ENCODE measurements at regions of chr15 and their contacts with region 1.

Region 1: GRCh38 chr15:43791993-43792760 is at the start of gene SERF2:
- DNase-seq: peak; percentile 98 to 100 (median 98)
- ATAC-seq: peak; percentile 95
- H3K4me3 ChIP-seq: peak within 1 kb of the TSS; percentile 95
- H3K27ac ChIP-seq: peak within 1 kb of the TSS; percentile 99
- H3K4me1 ChIP-seq: peaks cover 26 to 35% of the 10 kb centered on the region in 2 experiments
- H3K27me3 ChIP-seq: no peaks in the 10 kb centered on the region
- CTCF ChIP-seq: no peak
- EP300 ChIP-seq: 0 out of 2 replicates have a peak, but pooled peaks have one; percentile 25
- POLR2A ChIP-seq: peak; percentile 98
- RAD21 ChIP-seq: no peak
- polyA plus RNA-seq, gene SERF2: 2,726 to 3,360 TPM

Region 2: GRCh38 chr15:43776718-43777583 is 15.2 kb before region 1 on chr15 and contains the start of gene ELL3:
- CTCF ChIA-PET with region 1: no interaction called
- POLR2A ChIA-PET with region 1: interaction called, 13 read pairs
- in situ Hi-C with region 1: no loop called
- intact Hi-C with region 1: no loop called
- DNase-seq: peak; percentile 44 to 63 (median 61)
- ATAC-seq: peak; percentile 74
- H3K4me3 ChIP-seq: peak within 1 kb of the TSS; percentile 32
- H3K27ac ChIP-seq: peak within 1 kb of the TSS; percentile 70
- H3K4me1 ChIP-seq: peaks cover 3 to 19% of the 10 kb centered on the region in 2 experiments; a peak in 4 of 5 replicates
- H3K27me3 ChIP-seq: no peaks in the 10 kb centered on the region
- CTCF ChIP-seq: peak; percentile 39 to 61 (median 41); a peak in 5 of 6 replicates
- EP300 ChIP-seq: no peak
- POLR2A ChIP-seq: peak; percentile 50; the same call in 1 of the 2 replicates
- RAD21 ChIP-seq: no peak
- polyA plus RNA-seq, gene ELL3: 2.9 to 3.6 TPM

Region 3: GRCh38 chr15:43808960-43809678 is 16.9 kb after region 1 on chr15:
- CTCF ChIA-PET with region 1: interaction called, 3 read pairs
- POLR2A ChIA-PET with region 1: interaction called, 14 read pairs
- in situ Hi-C with region 1: no loop called
- intact Hi-C with region 1: no loop called
- DNase-seq: no peak
- ATAC-seq: no peak
- H3K4me3 ChIP-seq: no peak overlapping the region
- H3K27ac ChIP-seq: no peak overlapping the region
- H3K4me1 ChIP-seq: peaks cover 0 to 8% of the 10 kb centered on the region in 2 experiments; a peak in 2 of 5 replicates
- H3K27me3 ChIP-seq: no peaks in the 10 kb centered on the region
- CTCF ChIP-seq: no peak
- EP300 ChIP-seq: no peak
- POLR2A ChIP-seq: no peak
- RAD21 ChIP-seq: no peak